ENCODE measurements at regions of chr14 and their contacts with region 1.

Region 1: DNA sequence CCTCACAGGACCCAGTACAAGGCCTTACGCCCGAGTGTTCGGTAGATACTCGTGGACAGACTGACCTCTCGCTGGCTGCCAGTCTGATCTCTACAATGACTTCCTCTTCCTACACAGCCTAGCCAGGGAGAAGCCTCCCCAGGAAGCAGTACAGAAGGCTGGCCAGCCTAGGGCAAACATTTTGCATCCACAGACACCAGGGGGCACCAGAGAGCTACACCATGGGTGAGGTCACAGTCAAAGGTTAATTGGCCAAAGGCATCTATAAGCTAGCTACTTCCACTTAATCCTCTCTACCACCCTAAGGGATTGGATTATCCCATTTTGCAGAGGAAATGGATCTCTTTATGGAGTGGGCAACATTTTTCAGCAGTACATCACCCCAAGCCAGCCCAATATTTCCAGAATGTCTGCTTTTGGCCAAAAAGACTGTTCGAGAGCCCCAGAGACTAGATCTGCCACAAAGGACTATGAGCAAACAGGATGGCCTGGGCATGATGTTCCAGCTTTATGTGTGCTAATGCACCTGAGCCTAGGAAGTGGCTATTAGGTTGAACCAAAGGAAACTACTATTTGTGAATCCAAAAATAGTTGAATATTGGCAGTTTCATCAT is 14.6 kb upstream of the PNMA1 start:
- DNase-seq: peak; percentile 84 to 92
- ATAC-seq: peak; percentile 47 to 56 (median 54)
- H3K4me3 ChIP-seq: no peak overlapping the region
- H3K27ac ChIP-seq: peak overlapping the region; percentile 92
- H3K4me1 ChIP-seq: peaks cover 65% of the 10 kb centered on the region
- H3K27me3 ChIP-seq: no peaks in the 10 kb centered on the region
- CTCF ChIP-seq: peak; percentile 97

Region 2: GRCh38 chr14:73576391-73576790 is 152.4 kb before region 1 on chr14:
- intact Hi-C with region 1: no loop called
- DNase-seq: no peak
- ATAC-seq: no peak
- H3K4me3 ChIP-seq: no peak overlapping the region
- H3K27ac ChIP-seq: peak overlapping the region; percentile 23
- H3K4me1 ChIP-seq: peaks cover 11% of the 10 kb centered on the region
- H3K27me3 ChIP-seq: no peaks in the 10 kb centered on the region
- CTCF ChIP-seq: no peak

Region 3: GRCh38 chr14:73651005-73651404 is 77.8 kb before region 1 on chr14:
- intact Hi-C with region 1: no loop called
- DNase-seq: no peak
- ATAC-seq: no peak
- H3K4me3 ChIP-seq: no peak overlapping the region
- H3K27ac ChIP-seq: no peak overlapping the region
- H3K4me1 ChIP-seq: no peaks in the 10 kb centered on the region
- H3K27me3 ChIP-seq: no peaks in the 10 kb centered on the region
- CTCF ChIP-seq: no peak

Region 4: DNA sequence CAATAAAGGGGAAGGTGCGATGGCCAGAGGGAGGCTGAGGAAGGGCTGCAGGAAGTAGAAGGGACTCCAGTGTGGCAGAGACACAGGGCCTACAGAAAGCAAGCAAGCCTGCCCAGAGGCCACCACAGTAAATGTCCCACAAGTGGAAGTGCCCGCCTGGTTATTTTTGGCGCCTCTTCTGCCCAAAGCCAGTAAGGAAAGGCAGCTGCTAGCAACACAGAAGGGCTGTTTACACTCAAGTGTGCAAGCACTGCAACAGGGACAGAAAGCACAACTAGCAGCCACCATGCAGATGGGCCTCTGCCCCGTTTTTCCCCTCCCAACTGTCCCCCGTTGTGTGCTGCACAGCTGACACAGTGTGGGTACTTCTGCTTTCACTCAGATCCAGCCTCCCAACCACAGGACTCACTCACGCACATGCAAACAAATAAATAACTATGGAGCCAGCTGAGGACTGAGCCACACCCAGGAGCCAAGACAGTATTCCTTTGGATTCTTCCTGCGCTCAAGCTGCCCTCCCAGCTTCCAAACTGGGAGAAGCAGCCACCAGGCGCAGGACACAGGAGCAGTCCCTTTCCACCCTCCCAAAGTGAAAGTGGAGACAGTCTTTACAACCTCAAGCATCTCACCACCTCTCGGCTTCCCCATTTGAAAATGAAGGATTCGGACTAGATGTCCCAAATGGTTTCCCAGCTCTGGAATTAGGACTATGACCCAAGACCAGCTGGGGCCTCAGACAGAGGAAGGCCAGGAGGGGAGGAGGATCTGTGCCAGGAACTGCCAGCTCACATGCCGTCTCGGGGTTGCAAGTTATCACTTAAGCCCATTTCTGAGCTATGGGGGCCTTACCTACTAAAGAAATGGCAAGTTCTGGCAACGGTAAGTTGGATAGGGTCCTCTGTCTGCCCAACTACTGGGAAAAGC is 25.4 kb after region 1 on chr14:
- intact Hi-C with region 1: loop called in 1 of 2 experiments (anchors 2 kb)
- DNase-seq: no peak
- ATAC-seq: peak in 3 of 4 donors; percentile 9 to 27 (median 21)
- H3K4me3 ChIP-seq: peak overlapping the region; percentile 53
- H3K27ac ChIP-seq: peak overlapping the region; percentile 96
- H3K4me1 ChIP-seq: peaks cover 98% of the 10 kb centered on the region
- H3K27me3 ChIP-seq: no peaks in the 10 kb centered on the region
- CTCF ChIP-seq: no peak

Region 5: DNA sequence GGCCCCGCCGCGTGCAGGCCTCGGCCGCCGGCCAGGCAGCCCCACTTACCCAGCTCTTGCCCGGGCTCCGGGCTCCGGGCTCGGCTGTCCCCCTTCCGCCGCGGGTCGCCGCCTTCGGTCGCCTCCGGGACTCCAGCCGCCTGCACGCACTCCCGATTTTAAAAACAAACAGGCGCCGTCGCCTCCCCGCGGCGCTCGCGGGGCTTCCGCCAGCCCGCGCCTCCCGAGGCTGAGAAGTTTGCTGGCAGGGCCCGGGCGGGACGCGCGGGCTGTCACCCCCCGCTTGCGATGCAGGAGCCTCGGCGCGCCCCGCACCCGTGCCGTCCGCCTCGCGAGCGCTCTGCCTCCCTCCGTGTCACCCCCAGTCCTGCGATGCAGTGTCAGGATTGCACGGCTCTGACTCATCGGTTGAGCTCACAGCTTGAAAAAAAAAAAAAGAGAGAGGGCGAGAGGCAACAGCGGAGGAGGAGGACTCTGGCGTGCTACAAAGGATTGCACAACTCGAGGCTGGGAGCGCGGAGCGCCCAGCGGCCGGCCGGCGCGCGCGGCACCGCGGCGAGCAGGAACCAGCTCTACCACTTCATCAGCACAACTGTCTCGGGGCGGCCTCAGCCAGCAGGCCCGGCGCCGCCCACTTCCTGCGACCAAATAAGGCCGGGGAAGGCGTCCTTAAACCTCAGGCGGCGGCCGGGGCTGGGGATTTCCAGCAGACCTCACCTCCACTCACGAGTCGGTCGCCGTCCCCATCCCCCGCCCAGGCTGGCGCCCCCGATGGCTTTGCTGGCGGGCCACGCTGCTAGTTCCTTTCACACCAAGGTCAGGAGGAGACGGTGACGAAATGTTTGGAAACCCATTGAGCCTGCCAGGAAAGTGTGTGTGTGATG is 31.1 kb after region 1 on chr14:
- intact Hi-C with region 1: loop called in 1 of 2 experiments (anchors 2 kb)
- DNase-seq: peak; percentile 97 to 98
- ATAC-seq: peak; percentile 77 to 82 (median 80)
- H3K4me3 ChIP-seq: peak overlapping the region; percentile 78
- H3K27ac ChIP-seq: peak overlapping the region; percentile 96
- H3K4me1 ChIP-seq: peaks cover 86% of the 10 kb centered on the region
- H3K27me3 ChIP-seq: no peaks in the 10 kb centered on the region
- CTCF ChIP-seq: no peak

Region 6: DNA sequence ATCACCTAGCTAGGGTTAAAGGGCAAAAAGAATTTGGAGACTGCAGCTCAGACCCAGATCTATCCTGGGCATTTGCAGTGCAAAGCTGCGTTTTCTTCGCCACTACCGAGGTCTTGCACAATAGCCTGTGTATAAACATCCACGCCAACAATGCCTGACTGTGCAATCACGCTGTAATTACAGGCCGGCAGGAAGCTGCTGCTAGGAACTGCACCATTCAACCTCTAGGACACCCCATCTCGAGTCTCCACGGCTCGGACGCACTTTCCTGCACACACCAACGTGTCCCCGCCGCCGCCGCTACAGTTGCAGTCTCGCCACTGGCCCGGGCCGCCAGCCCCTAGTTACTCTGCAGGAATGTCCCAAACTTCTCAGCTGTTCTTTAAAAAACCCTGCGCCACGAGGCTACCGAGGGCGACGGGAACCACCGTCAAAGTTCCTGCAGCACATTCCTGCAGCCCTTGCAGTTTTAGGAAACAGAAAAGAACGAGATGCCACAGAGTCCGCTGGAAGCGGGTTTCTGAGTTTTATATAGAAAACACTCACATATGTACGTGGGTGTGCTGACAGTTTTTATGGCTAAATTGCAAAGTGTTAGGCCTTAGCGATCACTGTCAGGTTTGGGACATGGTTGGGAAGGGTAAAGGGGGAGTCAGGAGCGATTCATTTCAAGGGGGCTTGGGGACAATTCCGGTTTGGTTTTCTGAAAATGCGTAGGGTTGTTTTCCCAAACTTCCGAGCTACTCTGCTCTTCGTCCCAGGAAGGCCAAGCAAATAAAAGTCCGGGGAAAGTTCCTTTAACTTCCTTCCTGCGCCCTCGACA is 57.3 kb after region 1 on chr14:
- intact Hi-C with region 1: no loop called
- DNase-seq: peak; percentile 80 to 91
- ATAC-seq: peak; percentile 77 to 89 (median 86)
- H3K4me3 ChIP-seq: peak overlapping the region; percentile 82
- H3K27ac ChIP-seq: peak overlapping the region; percentile 98
- H3K4me1 ChIP-seq: peaks cover 71% of the 10 kb centered on the region
- H3K27me3 ChIP-seq: no peaks in the 10 kb centered on the region
- CTCF ChIP-seq: peak; percentile 28

Region 7: GRCh38 chr14:73825551-73826188 is 96.8 kb after region 1 on chr14:
- intact Hi-C with region 1: loop called (anchors 1 to 2 kb)
- DNase-seq: peak; percentile 92 to 96
- ATAC-seq: peak; percentile 94 to 99 (median 98)
- H3K4me3 ChIP-seq: no peak overlapping the region
- H3K27ac ChIP-seq: no peak overlapping the region
- H3K4me1 ChIP-seq: peaks cover 12% of the 10 kb centered on the region
- H3K27me3 ChIP-seq: no peaks in the 10 kb centered on the region
- CTCF ChIP-seq: peak; percentile 95

Measured in psoas muscle (tissue), 8 donors.